Right ventricle myocardium inferior (tissue), 1 donor: ENCODE measurements at regions of chr18 and their contacts with region 1.

Region 1: DNA sequence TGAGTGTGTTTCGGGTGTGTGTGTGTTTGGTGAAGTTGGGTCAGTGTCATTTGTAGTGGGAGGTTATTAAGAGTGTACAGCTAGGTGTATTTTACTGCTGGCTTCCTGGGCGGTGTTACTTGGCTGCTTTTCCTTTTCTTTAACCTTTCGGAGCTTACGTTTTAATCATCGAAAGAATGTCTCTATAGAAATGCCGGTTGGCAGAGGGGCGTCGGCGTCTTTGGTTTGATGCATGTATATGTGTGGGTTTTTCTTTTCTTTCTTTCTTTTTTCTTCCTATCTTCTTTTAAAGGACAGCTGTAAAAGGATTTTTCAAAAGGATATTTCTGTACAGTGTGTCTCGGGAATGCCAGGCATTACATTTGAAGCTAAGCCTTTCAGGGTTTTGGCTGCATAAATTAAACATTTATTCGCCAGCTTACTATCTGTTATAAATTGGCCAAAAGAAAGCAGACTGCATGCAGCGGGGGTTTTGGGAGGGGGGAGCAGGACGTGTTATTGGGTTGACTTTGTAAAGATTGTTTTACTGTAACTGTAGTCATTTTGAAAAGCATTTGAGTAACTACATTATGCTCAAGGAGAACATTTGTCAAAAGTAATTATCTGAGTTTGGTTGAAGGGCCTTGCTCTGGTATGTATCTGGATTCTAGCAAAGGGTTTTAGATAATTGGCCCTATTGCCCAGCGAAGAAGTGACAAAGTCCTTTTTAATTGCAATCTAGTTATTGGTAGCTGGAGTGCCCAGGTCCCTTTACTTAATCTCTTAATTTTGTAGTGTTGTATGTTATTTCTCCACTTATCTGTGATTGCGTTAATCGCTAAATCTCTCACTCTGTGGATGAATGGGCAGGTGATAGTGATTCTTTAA is 1.6 kb downstream of the ASXL3 start:
- DNase-seq: peak; percentile 58
- ATAC-seq: no peak

Region 2: GRCh38 chr18:32815881-32816280 is 763.7 kb before region 1 on chr18:
- intact Hi-C with region 1: no loop called
- DNase-seq: no peak
- ATAC-seq: no peak

Region 3: DNA sequence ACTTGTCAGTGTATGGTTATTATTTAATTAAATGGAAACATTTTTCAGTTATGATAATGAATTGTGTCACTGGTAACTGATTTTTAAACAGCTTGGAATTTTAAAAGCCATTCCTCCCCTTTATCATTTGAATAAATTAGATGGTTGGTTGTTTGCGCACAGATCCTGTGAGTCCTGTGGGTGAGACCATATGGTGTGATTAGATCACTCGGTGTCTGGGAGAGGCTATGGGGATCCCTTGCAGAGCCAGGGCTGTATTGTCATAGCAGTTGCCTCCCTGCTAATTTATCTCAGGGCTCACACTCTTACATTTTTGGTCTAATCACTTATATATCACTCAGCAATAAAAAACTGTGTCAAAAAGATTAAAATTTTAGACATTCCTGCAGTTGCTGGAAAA is 131.9 kb after region 1 on chr18:
- intact Hi-C with region 1: loop called (anchors 10 kb)
- DNase-seq: no peak
- ATAC-seq: no peak